Stomach (tissue), 19 donors: ENCODE measurements at regions of chr5 and their contacts with region 1.

Region 1: GRCh38 chr5:39063037-39063436 is 11.2 kb downstream of the RICTOR start:
- DNase-seq: no peak
- H3K4me3 ChIP-seq: no peak overlapping the region
- H3K27ac ChIP-seq: no peak overlapping the region
- H3K4me1 ChIP-seq: peaks cover 0 to 71% (median 36%) of the 10 kb centered on the region in 4 donors
- H3K27me3 ChIP-seq: no peaks in the 10 kb centered on the region
- CTCF ChIP-seq: no peak
- EP300 ChIP-seq: no peak
- POLR2A ChIP-seq: no peak

Region 2: GRCh38 chr5:38835887-38836286 is 227.2 kb before region 1 on chr5:
- intact Hi-C with region 1: no loop called
- DNase-seq: no peak
- H3K4me3 ChIP-seq: no peak overlapping the region
- H3K27ac ChIP-seq: no peak overlapping the region
- H3K4me1 ChIP-seq: peaks cover 0 to 5% (median 2%) of the 10 kb centered on the region in 4 donors
- H3K27me3 ChIP-seq: no peaks in the 10 kb centered on the region
- CTCF ChIP-seq: no peak
- EP300 ChIP-seq: no peak
- POLR2A ChIP-seq: no peak

Region 3: DNA sequence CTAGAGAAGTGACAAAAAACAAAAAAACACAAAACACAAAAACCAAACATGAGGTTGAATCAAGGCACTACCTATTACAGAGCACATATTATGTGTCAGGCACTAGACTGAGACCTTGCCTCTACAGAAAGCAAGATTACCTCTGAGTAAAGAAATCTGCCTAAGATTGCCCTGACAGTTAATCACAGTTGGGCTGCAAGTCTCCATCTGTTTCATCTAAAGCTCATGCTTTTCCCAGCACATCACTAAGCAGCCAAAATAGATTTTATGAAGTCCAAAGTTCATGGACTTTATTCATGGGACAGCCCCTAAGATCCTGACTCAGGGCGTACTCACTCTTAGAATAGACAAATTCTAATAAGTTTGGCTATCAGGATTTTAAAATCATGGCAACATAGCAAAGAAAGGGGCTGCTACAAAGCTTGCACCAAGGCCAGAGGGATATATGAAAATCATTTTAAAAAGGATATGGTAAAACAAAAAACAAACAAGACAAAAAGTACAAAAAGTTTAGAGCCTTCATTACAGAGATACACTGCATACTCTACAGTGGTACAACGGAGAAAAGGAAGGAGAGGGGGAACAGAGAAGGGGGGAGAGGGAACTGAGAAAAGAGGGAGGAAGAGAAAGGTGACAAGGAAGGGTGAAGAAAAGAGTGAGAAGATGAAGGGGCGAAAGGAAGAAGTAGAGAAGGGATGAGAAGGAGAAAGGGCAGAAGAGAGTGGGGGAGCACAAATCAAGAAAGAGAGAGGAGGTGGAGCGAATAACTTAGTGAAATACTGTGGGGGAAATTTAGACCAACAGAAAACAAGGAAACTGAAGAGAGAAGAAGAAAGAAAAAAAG is 47.1 kb before region 1 on chr5:
- intact Hi-C with region 1: loop called (anchors 10 kb)
- DNase-seq: peak in 1 of 2 donors; percentile 26
- H3K4me3 ChIP-seq: no peak overlapping the region
- H3K27ac ChIP-seq: peak overlapping the region in 4 of 5 donors; percentile 54 to 81 (median 70)
- H3K4me1 ChIP-seq: peaks cover 0 to 31% (median 22%) of the 10 kb centered on the region in 4 donors
- H3K27me3 ChIP-seq: no peaks in the 10 kb centered on the region
- CTCF ChIP-seq: no peak
- EP300 ChIP-seq: no peak
- POLR2A ChIP-seq: no peak